ENCODE measurements at regions of chr5 and their contacts with region 1.

Region 1: DNA sequence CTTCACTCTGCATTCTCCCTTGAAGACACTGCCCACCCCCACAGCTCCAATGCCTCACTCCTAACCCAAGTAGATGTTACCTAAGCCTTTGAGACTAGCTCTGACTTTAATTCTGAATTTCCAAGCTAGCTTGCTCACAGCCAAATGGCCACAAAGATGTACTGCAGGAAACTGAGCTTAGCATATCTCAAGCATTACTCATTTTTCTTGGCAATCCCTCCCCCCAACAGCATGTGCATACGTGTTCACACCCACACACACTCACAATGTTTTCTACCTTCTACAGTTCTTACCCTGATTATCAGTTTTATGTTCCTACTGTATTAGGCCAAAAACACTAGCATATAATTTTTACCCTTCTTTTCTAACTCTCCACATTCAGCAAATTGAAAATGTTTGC is 13.7 kb upstream of the GRIA1 start:
- DNase-seq: peak; percentile 85
- H3K4me3 ChIP-seq: no peak overlapping the region
- H3K27ac ChIP-seq: peak overlapping the region; percentile 7
- H3K4me1 ChIP-seq: peaks cover 11% of the 10 kb centered on the region
- H3K27me3 ChIP-seq: no peaks in the 10 kb centered on the region
- CTCF ChIP-seq: peak; percentile 50 to 55

Region 2: DNA sequence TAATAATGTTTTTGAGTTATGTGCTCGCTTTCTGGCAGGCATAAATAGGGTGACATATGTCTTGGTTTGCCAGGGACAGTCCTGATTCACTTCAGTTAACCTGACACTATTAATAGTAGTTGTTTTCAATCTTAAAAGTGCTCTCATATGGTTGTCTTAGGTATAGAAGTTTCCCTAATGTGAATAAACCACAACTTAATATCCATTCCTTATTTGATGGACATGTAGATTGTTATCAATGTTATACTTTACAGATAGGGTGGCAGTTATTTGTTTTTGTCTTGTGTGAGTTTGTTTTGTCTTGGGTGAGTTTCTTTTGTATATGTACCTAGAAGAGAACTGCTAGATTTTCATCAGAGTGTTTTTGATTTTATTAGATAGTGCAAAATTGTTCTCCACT is 1697.1 kb before region 1 on chr5:
- CTCF ChIA-PET with region 1: no interaction called
- dilution Hi-C with region 1: no loop called
- in situ Hi-C with region 1: no loop called
- intact Hi-C with region 1: no loop called
- DNase-seq: no peak
- H3K4me3 ChIP-seq: no peak overlapping the region
- H3K27ac ChIP-seq: no peak overlapping the region
- H3K4me1 ChIP-seq: peaks cover 14% of the 10 kb centered on the region
- H3K27me3 ChIP-seq: no peaks in the 10 kb centered on the region
- CTCF ChIP-seq: no peak

Region 3: GRCh38 chr5:153147891-153148623 is 328.7 kb before region 1 on chr5:
- CTCF ChIA-PET with region 1: no interaction called
- dilution Hi-C with region 1: no loop called
- in situ Hi-C with region 1: no loop called
- intact Hi-C with region 1: loop called (anchors 5 kb)
- DNase-seq: peak; percentile 78
- H3K4me3 ChIP-seq: no peak overlapping the region
- H3K27ac ChIP-seq: no peak overlapping the region
- H3K4me1 ChIP-seq: peaks cover 6% of the 10 kb centered on the region
- H3K27me3 ChIP-seq: no peaks in the 10 kb centered on the region
- CTCF ChIP-seq: peak; percentile 54 to 85

Region 4: DNA sequence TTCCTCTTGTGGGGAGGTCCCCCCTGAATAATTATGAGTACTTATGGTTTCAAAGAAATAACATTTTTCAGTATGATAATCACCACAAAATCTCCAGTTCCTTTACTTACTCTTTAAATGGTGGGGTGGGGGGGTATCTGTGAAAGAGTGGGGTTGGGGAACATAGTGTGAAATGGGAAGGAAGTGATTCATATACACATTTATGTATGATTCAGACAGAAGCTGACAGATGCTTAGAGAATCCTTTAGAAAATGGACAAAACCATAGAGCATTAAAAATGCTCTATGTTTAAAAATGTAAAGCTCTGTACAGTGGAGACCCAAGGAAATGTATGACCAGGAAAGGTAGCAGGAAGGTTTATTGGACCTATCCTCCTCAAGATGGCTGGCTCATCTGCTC is 253.8 kb before region 1 on chr5:
- CTCF ChIA-PET with region 1: no interaction called
- dilution Hi-C with region 1: no loop called
- in situ Hi-C with region 1: no loop called
- intact Hi-C with region 1: loop called (anchors 10 kb)
- DNase-seq: peak; percentile 23
- H3K4me3 ChIP-seq: no peak overlapping the region
- H3K27ac ChIP-seq: peak overlapping the region; percentile 41
- H3K4me1 ChIP-seq: peaks cover 17% of the 10 kb centered on the region
- H3K27me3 ChIP-seq: no peaks in the 10 kb centered on the region
- CTCF ChIP-seq: no peak

Region 5: GRCh38 chr5:155299386-155300005 is 1822.7 kb after region 1 on chr5:
- CTCF ChIA-PET with region 1: no interaction called
- dilution Hi-C with region 1: no loop called
- in situ Hi-C with region 1: no loop called
- intact Hi-C with region 1: no loop called
- DNase-seq: no peak
- H3K4me3 ChIP-seq: no peak overlapping the region
- H3K27ac ChIP-seq: no peak overlapping the region
- H3K4me1 ChIP-seq: no peaks in the 10 kb centered on the region
- H3K27me3 ChIP-seq: no peaks in the 10 kb centered on the region
- CTCF ChIP-seq: no peak

Measured in mammary epithelial cell (primary cell).